Adrenal gland (tissue), 19 donors: ENCODE measurements at regions of chr2 and their contacts with region 1.

Region 1: DNA sequence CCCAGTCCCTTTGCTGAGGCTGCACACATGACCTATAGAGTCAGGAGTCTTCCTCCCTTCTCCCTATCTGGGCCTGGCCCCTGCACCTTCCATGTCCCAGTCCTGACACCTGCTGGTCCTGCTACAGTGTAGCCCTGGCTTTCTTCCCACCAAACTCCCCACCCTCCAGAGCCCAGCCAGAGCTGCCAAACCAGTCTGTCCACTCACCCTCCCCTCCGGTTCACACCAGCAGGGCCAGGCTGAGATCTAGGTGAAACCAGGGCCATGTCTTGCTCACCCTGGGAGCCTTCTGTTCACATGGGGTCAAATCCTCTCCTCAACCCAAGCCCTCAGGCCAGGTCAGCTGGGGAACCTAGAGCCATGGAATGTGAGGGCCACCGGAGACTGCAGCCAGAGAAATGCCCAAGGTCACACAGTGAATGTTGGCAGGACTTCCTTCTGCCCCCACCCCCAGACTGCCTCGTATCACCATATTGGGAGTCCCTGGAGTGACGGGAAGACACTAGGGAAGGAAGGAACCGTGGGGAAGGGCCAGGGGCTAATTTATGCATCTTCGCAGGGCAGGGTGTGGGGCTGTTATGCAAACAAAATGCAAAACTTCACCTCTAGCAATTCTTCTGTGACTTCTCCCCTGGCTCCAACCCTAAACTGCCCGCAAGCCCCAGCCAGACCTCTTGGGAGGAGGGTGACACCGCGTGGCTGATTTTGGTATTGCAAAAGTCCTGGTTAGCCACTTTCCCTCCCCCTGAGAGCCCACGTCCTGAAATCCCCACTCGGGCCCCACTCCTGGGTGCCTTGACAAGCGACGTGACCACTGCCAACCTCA is 14.6 kb downstream of the TNS1 start:
- DNase-seq: peak; percentile 89 to 96 (median 92)
- H3K4me3 ChIP-seq: no peak overlapping the region
- H3K27ac ChIP-seq: peak overlapping the region; percentile 40 to 84 (median 74)
- H3K4me1 ChIP-seq: peaks cover 25 to 34% of the 10 kb centered on the region in 2 donors
- H3K27me3 ChIP-seq: no peaks in the 10 kb centered on the region
- CTCF ChIP-seq: peak; percentile 90 to 98 (median 94)
- POLR2A ChIP-seq: no peak

Region 2: GRCh38 chr2:217886720-217887309 is 101.4 kb before region 1 on chr2:
- intact Hi-C with region 1: loop called in 1 of 2 experiments (anchors 5 kb)
- DNase-seq: peak; percentile 77 to 90 (median 78)
- H3K4me3 ChIP-seq: no peak overlapping the region
- H3K27ac ChIP-seq: peak overlapping the region in 2 of 5 donors; percentile 68 to 71
- H3K4me1 ChIP-seq: peaks cover 0 to 37% of the 10 kb centered on the region in 2 donors
- H3K27me3 ChIP-seq: no peaks in the 10 kb centered on the region
- CTCF ChIP-seq: peak; percentile 79 to 90 (median 85)
- POLR2A ChIP-seq: no peak

Region 3: GRCh38 chr2:217899231-217900009 is 88.8 kb before region 1 on chr2:
- intact Hi-C with region 1: loop called (anchors 5 kb)
- DNase-seq: peak; percentile 85 to 97 (median 94)
- H3K4me3 ChIP-seq: no peak overlapping the region
- H3K27ac ChIP-seq: peak overlapping the region; percentile 45 to 98 (median 88)
- H3K4me1 ChIP-seq: peaks cover 58 to 72% of the 10 kb centered on the region in 2 donors
- H3K27me3 ChIP-seq: no peaks in the 10 kb centered on the region
- CTCF ChIP-seq: peak; percentile 72 to 89 (median 82)
- POLR2A ChIP-seq: no peak

Region 4: GRCh38 chr2:217934321-217935131 is 53.7 kb before region 1 on chr2:
- intact Hi-C with region 1: loop called in 1 of 2 experiments (anchors 10 kb)
- DNase-seq: peak in 6 of 7 donors; percentile 80 to 89 (median 85)
- H3K4me3 ChIP-seq: peak overlapping the region in 1 of 4 donors; percentile 9
- H3K27ac ChIP-seq: peak overlapping the region; percentile 63 to 98 (median 80)
- H3K4me1 ChIP-seq: peaks cover 88 to 99% of the 10 kb centered on the region in 2 donors
- H3K27me3 ChIP-seq: no peaks in the 10 kb centered on the region
- CTCF ChIP-seq: no peak
- POLR2A ChIP-seq: peak in 1 of 2 donors; percentile 31